ENCODE measurements at regions of chr2 and their contacts with region 1.

Region 1: DNA sequence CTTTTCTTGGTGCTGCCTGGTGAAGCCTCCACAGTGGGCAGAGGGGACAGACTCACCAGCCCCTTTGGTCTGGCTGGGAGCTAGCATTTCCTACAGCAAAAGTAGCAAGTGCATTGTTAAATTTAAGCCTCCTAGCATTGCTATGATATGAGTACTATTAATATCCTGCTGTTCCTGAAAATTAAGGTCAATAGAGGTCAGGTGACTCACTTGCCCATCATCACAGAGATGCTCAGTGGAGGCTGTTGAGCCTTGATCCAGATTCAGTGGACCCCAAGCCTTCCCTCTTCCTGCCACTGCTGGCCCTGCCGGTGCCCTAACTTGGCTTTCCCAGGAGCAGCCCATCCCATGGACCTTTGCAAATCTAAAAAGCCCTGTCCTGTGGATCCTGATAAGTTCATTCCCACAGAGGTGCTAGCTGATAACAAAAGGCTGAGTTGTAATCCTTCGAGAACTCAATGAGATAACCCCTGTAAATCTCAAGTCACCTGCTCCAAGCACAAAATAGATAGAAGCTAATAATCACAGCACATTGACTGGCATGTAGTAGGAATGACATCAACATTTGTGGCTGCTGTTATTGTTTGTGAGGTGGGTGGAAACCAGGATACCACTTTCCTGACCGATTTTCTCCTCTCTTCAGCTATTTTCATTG is 84.4 kb downstream of the THNSL2 start:
- DNase-seq: no peak
- H3K4me3 ChIP-seq: no peak overlapping the region
- H3K27ac ChIP-seq: no peak overlapping the region
- H3K4me1 ChIP-seq: no peaks in the 10 kb centered on the region; a peak in 1 of 7 replicates
- H3K27me3 ChIP-seq: no peaks in the 10 kb centered on the region
- CTCF ChIP-seq: no peak
- EP300 ChIP-seq: no peak
- POLR2A ChIP-seq: no peak
- RAD21 ChIP-seq: no peak

Region 2: GRCh38 chr2:88239781-88240180 is 14.8 kb before region 1 on chr2:
- CTCF ChIA-PET with region 1: interaction called, 14 read pairs
- POLR2A ChIA-PET with region 1: no interaction called
- DNase-seq: no peak
- H3K4me3 ChIP-seq: no peak overlapping the region
- H3K27ac ChIP-seq: no peak overlapping the region
- H3K4me1 ChIP-seq: peaks cover 0 to 5% (median 0%) of the 10 kb centered on the region in 4 experiments; a peak in 1 of 7 replicates
- H3K27me3 ChIP-seq: no peaks in the 10 kb centered on the region
- CTCF ChIP-seq: no peak
- EP300 ChIP-seq: no peak
- POLR2A ChIP-seq: no peak
- RAD21 ChIP-seq: no peak

Region 3: DNA sequence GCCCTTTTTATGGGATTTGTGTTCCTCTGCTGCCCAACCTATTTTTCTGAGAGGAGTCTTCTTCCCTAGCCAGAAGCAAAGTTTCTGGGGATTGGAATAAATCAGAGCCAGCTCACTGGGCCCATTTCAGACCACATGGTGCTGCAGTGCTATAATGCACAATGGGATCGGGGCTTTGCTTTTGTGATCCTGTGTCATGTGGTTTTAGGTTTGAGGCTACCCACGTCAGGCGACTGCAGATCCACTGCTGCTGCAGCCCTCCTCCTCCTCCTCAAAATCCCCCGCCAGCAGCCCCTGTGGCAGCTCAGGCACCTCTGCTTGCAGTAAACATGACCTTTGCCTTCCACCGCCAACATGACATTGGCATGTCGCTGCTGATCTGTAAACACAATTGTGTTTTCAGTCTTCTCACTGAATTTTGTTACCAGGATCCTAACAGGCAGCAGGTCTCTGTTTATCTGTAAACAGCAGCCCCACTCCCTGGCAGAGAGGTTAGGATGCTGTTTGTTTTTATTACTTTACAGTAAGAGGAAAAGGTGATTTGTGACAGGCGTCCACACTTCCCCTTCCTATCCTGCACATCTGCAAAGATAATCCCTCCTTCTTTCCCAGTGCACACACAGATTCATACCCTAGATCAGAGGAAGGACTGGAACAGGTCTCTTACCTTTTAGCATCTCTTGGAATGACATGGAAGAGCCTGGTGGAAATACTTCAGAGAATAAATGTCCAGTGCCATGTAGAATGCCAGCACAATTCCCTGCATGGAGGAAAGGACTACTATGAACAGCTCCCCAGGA is 67.1 kb after region 1 on chr2:
- CTCF ChIA-PET with region 1: no interaction called
- POLR2A ChIA-PET with region 1: no interaction called
- DNase-seq: no peak
- H3K4me3 ChIP-seq: no peak overlapping the region
- H3K27ac ChIP-seq: no peak overlapping the region
- H3K4me1 ChIP-seq: peaks cover 2 to 9% (median 4%) of the 10 kb centered on the region in 4 experiments; a peak in 4 of 7 replicates
- H3K27me3 ChIP-seq: no peaks in the 10 kb centered on the region
- CTCF ChIP-seq: no peak
- EP300 ChIP-seq: no peak
- POLR2A ChIP-seq: no peak
- RAD21 ChIP-seq: no peak

Measured in H1 (cell line).